ENCODE measurements at regions of chr5 and their contacts with region 1.

Region 1: GRCh38 chr5:171907725-171908343 is 98.6 kb downstream of the FBXW11 start:
- DNase-seq: no peak
- ATAC-seq: peak; percentile 86
- H3K4me3 ChIP-seq: no peak overlapping the region
- H3K27ac ChIP-seq: peak overlapping the region; percentile 43
- H3K4me1 ChIP-seq: peaks cover 21% of the 10 kb centered on the region
- H3K27me3 ChIP-seq: no peaks in the 10 kb centered on the region
- CTCF ChIP-seq: peak; percentile 81

Region 2: GRCh38 chr5:171418316-171418981 is 489.4 kb before region 1 on chr5:
- intact Hi-C with region 1: loop called (anchors 10 kb)
- DNase-seq: peak; percentile 88
- ATAC-seq: peak; percentile 89
- H3K4me3 ChIP-seq: peak overlapping the region; percentile 44
- H3K27ac ChIP-seq: no peak overlapping the region
- H3K4me1 ChIP-seq: peaks cover 24% of the 10 kb centered on the region
- H3K27me3 ChIP-seq: no peaks in the 10 kb centered on the region
- CTCF ChIP-seq: peak; percentile 92

Region 3: DNA sequence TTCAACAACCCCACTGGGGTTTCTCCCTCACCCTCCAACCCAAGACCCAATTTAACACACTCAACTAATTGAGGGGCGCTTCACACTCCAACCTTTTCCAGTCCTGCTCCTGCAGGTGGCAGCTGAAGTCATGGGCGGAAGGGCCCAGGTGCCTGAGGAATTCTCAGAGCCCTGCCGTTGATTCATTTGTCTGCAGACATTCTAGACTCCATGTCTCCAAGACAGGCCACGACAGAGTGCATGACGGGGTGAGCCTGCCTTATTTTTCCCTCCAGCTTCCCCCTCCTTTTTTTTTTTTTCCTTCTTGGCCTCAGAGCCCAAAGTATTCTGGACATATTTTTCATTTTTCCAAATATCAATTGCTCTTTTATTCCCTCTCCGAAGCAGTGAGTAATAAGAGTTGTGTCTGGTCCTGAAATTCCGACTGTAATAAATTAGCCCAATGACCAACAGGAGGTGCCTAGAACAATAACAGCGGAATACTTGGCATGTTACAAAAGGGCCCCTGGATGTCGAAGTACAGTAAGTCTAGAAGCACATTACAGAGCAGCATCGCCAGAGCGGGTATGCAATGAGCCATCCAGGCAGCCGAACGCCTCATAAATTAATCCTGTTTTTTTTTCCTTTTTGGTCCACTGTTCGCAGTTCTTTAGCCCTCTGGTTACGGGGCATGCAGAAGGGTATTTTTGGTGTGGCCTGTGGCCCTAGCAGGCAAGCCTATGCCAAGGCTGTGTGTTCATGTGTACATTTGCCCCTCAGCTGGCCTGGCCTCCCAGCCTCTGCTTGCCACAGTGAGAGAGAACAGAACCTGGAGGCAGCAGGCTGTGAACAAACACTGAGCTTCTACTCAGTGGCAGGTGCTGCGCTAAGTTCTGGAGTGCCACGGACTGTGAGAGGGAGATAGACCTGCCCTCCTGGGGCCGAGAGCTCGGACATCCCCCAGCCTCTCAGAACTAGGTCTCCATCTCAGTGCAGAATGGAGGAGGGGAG is 130.8 kb before region 1 on chr5:
- intact Hi-C with region 1: no loop called
- DNase-seq: no peak
- ATAC-seq: no peak
- H3K4me3 ChIP-seq: no peak overlapping the region
- H3K27ac ChIP-seq: no peak overlapping the region
- H3K4me1 ChIP-seq: no peaks in the 10 kb centered on the region
- H3K27me3 ChIP-seq: no peaks in the 10 kb centered on the region
- CTCF ChIP-seq: no peak

Region 4: DNA sequence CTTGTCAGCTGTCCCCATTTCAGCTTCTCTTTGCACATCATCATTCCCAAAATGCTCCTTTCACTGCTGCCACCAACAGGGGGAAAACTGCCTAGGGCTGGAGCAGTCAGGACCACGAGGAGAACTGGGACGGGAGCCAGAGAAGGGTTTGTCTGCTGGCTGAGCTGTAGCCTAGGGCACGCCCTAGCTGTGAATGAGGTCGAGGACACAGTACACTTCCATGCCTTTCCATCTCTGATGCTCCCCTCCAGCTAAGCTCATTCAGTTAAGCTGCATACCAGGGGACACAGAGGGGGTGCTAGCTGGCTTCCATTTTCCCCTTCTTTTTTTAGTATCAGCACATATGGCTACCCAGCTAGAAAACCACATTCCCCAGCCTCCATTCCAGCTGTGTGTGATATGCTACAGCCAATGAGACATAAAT is 215.4 kb after region 1 on chr5:
- intact Hi-C with region 1: no loop called
- DNase-seq: no peak
- ATAC-seq: peak; percentile 72
- H3K4me3 ChIP-seq: no peak overlapping the region
- H3K27ac ChIP-seq: no peak overlapping the region
- H3K4me1 ChIP-seq: peaks cover 10% of the 10 kb centered on the region
- H3K27me3 ChIP-seq: no peaks in the 10 kb centered on the region
- CTCF ChIP-seq: peak; percentile 42